Gastrocnemius medialis (tissue), 4 donors: ENCODE measurements at regions of chr22 and their contacts with region 1.

Region 1: GRCh38 chr22:27718186-27719032 is 83.1 kb downstream of the MN1 start:
- DNase-seq: peak; percentile 78 to 91
- ATAC-seq: peak; percentile 75 to 86
- H3K4me3 ChIP-seq: peak overlapping the region in 2 of 4 donors; percentile 15 to 24
- H3K27ac ChIP-seq: peak overlapping the region; percentile 73 to 81 (median 76)
- H3K4me1 ChIP-seq: peaks cover 33 to 46% of the 10 kb centered on the region in 2 donors
- H3K27me3 ChIP-seq: no peaks in the 10 kb centered on the region
- CTCF ChIP-seq: no peak
- POLR2A ChIP-seq: peak; percentile 60 to 64

Region 2: GRCh38 chr22:27632451-27633295 is 85.7 kb before region 1 on chr22:
- in situ Hi-C with region 1: no loop called
- intact Hi-C with region 1: loop called (anchors 2 kb)
- DNase-seq: no peak
- ATAC-seq: no peak
- H3K4me3 ChIP-seq: no peak overlapping the region
- H3K27ac ChIP-seq: no peak overlapping the region
- H3K4me1 ChIP-seq: peaks cover 11 to 15% of the 10 kb centered on the region in 2 donors
- H3K27me3 ChIP-seq: no peaks in the 10 kb centered on the region
- CTCF ChIP-seq: no peak
- POLR2A ChIP-seq: no peak

Region 3: GRCh38 chr22:27651486-27651885 is 66.9 kb before region 1 on chr22:
- in situ Hi-C with region 1: no loop called
- intact Hi-C with region 1: loop called (anchors 2 kb)
- DNase-seq: peak; percentile 83 to 95
- ATAC-seq: peak; percentile 89 to 93
- H3K4me3 ChIP-seq: no peak overlapping the region
- H3K27ac ChIP-seq: peak overlapping the region; percentile 86 to 97 (median 96)
- H3K4me1 ChIP-seq: peaks cover 34 to 38% of the 10 kb centered on the region in 2 donors
- H3K27me3 ChIP-seq: no peaks in the 10 kb centered on the region
- CTCF ChIP-seq: peak in 2 of 5 experiments; percentile 22 to 39
- POLR2A ChIP-seq: peak; percentile 39 to 41

Region 4: GRCh38 chr22:27668828-27669797 is 49.3 kb before region 1 on chr22:
- in situ Hi-C with region 1: no loop called
- intact Hi-C with region 1: loop called (anchors 2 kb)
- DNase-seq: peak; percentile 95 to 99
- ATAC-seq: peak; percentile 84 to 86
- H3K4me3 ChIP-seq: no peak overlapping the region
- H3K27ac ChIP-seq: peak overlapping the region; percentile 88 to 91 (median 90)
- H3K4me1 ChIP-seq: peaks cover 31 to 38% of the 10 kb centered on the region in 2 donors
- H3K27me3 ChIP-seq: no peaks in the 10 kb centered on the region
- CTCF ChIP-seq: no peak
- POLR2A ChIP-seq: peak; percentile 82 to 88

Region 5: GRCh38 chr22:27686534-27686933 is 31.9 kb before region 1 on chr22:
- in situ Hi-C with region 1: no loop called
- intact Hi-C with region 1: loop called (anchors 2 kb)
- DNase-seq: peak; percentile 86 to 96
- ATAC-seq: peak; percentile 87 to 88
- H3K4me3 ChIP-seq: no peak overlapping the region
- H3K27ac ChIP-seq: peak overlapping the region; percentile 93 to 98 (median 96)
- H3K4me1 ChIP-seq: peaks cover 25% of the 10 kb centered on the region in 2 donors
- H3K27me3 ChIP-seq: no peaks in the 10 kb centered on the region
- CTCF ChIP-seq: no peak
- POLR2A ChIP-seq: peak; percentile 57 to 58

Region 6: GRCh38 chr22:27780161-27780575 is 61.8 kb after region 1 on chr22:
- in situ Hi-C with region 1: no loop called
- intact Hi-C with region 1: loop called (anchors 1 kb)
- DNase-seq: no peak
- ATAC-seq: no peak
- H3K4me3 ChIP-seq: no peak overlapping the region
- H3K27ac ChIP-seq: peak overlapping the region; percentile 90 to 95 (median 94)
- H3K4me1 ChIP-seq: peaks cover 68 to 80% of the 10 kb centered on the region in 2 donors
- H3K27me3 ChIP-seq: no peaks in the 10 kb centered on the region
- CTCF ChIP-seq: no peak
- POLR2A ChIP-seq: no peak

Region 7: GRCh38 chr22:27866132-27867086 is 148.0 kb after region 1 on chr22:
- in situ Hi-C with region 1: no loop called
- intact Hi-C with region 1: loop called (anchors 5 kb)
- DNase-seq: peak; percentile 63 to 65
- ATAC-seq: peak; percentile 80 to 89
- H3K4me3 ChIP-seq: peak overlapping the region in 3 of 4 donors; percentile 5 to 16 (median 7)
- H3K27ac ChIP-seq: peak overlapping the region; percentile 77 to 88 (median 80)
- H3K4me1 ChIP-seq: peaks cover 42 to 47% of the 10 kb centered on the region in 2 donors
- H3K27me3 ChIP-seq: no peaks in the 10 kb centered on the region
- CTCF ChIP-seq: no peak
- POLR2A ChIP-seq: no peak